ENCODE measurements at regions of chr21 and their contacts with region 1.

Region 1: GRCh38 chr21:26715878-26716506 is 129.2 kb downstream of the ADAMTS1 start:
- DNase-seq: peak in 1 of 3 donors; percentile 53
- ATAC-seq: peak; percentile 81
- H3K4me3 ChIP-seq: no peak overlapping the region
- H3K4me1 ChIP-seq: no peaks in the 10 kb centered on the region
- CTCF ChIP-seq: peak; percentile 50

Region 2: DNA sequence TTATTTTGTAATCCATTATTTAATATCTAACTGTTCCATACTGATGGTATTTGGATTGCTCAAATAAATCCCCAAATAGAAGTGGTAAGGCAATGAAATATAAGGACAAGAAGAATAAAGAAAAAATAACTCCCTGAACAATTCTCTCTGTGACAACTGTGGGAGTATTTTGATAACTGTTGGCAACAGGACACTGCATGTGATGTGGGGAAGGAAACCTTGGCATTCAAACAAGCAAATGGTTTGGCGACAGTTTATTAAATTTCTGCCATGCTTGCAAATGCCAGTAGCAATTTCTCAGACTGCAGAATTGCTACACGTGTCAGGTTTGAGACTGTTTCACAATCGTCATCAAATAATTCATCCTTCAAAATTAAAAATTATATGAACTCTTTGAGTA is 1100.1 kb before region 1 on chr21:
- intact Hi-C with region 1: loop called in 1 of 2 experiments (anchors 10 kb)
- DNase-seq: no peak
- ATAC-seq: no peak
- H3K4me3 ChIP-seq: no peak overlapping the region
- H3K4me1 ChIP-seq: peaks cover 3% of the 10 kb centered on the region
- CTCF ChIP-seq: no peak

Region 3: GRCh38 chr21:26572702-26573381 is 143.2 kb before region 1 on chr21 and contains the start of gene CYYR1:
- intact Hi-C with region 1: no loop called
- DNase-seq: peak in 2 of 3 donors; percentile 16 to 49
- ATAC-seq: no peak
- H3K4me3 ChIP-seq: no peak within 1 kb of the TSS
- H3K4me1 ChIP-seq: no peaks in the 10 kb centered on the region
- CTCF ChIP-seq: no peak
- total RNA-seq, gene CYYR1: 4.3 to 5.9 (median 5.2) TPM

Measured in mucosa of descending colon (tissue), 3 donors.